Head of caudate nucleus (tissue), 42 donors: ENCODE measurements at regions of chr14 and their contacts with region 1.

Region 1: GRCh38 chr14:39432179-39432618 is at the start of gene FBXO33:
- DNase-seq: peak; percentile 94 to 99 (median 98)

Region 2: GRCh38 chr14:39114073-39114838 is 317.9 kb before region 1 on chr14 and contains the start of gene GEMIN2:
- intact Hi-C with region 1: loop called (anchors 5 kb)
- DNase-seq: peak; percentile 82 to 97 (median 94)

Region 3: DNA sequence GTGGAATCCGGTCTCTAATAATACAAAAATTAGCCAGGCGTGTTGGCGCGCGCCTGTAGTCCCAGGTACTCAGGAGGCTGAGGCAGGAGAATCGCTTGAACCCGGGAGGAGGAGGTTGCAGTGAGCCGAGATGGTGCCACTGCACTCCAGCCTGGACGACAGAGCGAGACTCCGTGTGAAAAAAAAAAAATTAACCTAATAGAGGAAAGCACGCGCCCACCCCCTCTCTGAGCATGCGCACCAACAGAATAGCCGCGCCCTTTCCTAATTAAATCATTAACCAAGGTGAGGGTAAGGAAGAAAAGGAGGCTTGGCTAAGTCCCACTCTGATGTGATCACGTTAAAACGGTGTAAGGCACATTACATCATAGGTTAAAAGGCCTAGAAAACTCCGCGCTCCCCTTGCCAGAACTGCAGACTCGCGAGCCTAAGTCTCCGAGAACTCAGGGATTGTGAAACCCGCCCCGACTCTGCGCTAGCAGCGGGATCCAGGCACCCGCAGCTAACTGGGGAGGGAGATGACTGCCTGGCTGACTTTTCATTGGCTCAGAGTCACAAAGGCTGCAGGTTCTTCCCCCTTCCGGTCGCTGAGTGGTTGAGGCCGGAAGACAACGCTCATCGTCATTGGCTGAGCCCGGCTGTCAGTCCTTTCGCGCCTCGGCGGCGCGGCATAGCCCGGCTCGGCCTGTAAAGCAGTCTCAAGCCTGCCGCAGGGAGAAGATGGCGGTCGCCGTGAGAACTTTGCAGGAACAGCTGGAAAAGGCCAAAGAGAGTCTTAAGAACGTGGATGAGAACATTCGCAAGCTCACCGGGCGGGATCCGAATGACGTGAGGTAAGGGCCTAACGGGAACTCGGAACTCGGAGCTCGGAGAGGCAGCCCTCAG is 257.4 kb before region 1 on chr14 and contains the start of gene PNN:
- intact Hi-C with region 1: loop called (anchors 2 kb)
- DNase-seq: peak; percentile 95 to 99 (median 98)

Region 4: DNA sequence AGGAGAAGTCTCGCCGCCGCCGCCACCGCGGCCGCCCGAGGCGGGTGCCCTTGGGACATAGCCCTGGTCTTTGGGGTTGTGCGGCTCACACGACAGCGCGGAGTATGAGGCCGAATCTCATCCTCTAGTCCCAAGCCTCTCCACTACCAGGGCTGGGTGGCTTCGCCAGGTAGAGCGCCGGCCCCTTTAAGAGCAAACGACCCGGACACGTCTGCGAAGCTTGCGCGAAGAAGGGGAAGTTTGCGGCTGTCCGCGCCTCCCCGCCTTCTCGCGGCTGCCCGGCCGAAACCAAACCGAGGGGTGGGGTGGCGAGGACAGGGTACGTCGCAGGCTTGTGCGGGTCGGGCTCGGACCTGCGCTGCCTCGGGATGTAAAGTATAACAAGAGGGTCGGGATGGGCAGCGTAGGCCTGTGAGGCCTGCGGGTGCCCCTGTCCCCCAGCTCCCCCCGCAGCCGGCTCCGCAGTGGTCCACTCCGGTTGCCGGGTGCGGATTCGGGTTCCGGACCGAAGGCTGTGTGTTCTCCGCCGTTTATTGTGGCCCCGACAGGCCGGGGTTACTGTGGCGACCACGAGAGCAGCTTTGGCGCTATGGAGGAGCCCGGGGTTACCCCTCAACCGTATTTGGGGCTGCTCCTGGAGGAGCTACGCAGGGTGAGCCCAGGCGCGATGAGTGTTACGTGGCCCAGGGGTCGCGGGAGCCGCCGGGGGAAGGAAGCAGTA is 165.2 kb before region 1 on chr14:
- intact Hi-C with region 1: loop called (anchors 10 kb)
- DNase-seq: peak; percentile 53 to 92 (median 82)

Region 5: DNA sequence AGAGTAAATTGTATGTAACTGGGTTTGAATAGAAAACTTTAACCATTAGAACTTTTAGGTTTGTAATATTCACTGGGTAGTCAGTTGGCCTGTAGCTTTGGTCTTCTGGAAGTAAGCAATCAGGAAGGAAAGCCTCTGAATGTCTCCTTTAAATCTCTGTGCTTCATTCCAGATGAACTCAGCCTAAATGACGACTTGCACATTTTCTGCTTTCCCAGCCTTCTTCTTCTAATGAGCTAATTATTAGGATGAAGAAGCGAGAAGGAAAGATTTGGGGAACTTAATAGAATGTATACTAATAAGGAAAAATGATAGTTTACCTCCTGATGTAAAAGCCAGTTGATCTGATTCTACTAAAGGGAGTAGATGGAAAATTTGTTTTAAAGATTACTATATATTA is 108.1 kb before region 1 on chr14:
- intact Hi-C with region 1: no loop called
- DNase-seq: no peak

Region 6: GRCh38 chr14:39469094-39469710 is 37.0 kb after region 1 on chr14:
- intact Hi-C with region 1: no loop called
- DNase-seq: peak in 25 of 42 donors; percentile 6 to 64 (median 29)